Ascending aorta (tissue), 2 donors: ENCODE measurements at regions of chr9 and their contacts with region 1.

Region 1: DNA sequence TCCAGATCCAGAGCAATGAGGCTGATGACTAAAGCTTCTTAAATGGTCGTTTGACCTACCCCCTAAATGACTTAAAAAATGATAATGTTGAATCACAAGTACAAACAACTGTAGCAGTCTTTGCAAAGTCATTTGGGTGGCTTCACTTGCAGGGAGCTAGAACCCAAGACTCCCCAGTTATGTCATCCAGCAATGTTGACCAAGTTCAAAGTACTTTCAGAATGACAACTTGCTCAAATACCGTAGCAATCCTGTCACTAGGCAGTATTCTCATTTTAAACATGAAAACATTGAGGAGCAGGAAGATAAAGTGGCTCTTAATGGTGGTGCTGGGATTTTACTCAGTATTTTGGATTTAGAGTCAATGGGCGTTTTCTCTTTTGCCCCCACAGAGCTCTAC is 1217.0 kb upstream of the DMAC1 start:
- DNase-seq: no peak
- H3K4me3 ChIP-seq: no peak overlapping the region
- H3K27ac ChIP-seq: no peak overlapping the region
- H3K4me1 ChIP-seq: no peaks in the 10 kb centered on the region
- H3K27me3 ChIP-seq: no peaks in the 10 kb centered on the region
- CTCF ChIP-seq: no peak

Region 2: DNA sequence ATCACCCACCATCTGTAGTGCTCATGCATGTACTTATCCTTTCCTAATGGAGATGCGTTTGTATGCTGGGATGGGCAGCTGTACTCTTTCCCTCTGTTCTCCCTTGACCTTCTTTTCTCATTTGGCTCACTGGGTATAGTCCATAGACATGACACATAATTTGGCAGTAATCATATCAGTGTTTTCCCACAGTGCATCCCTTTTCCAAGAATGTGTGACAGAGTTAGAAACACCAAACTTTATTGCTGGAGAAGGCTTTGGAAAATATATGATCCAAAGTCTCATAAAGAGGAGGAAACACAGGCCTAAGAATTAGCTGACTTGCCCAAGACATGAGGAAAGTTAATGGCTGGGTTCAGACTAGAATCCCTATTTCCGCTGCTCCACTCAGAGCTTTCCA is 16.4 kb after region 1 on chr9:
- intact Hi-C with region 1: no loop called
- DNase-seq: no peak
- H3K4me3 ChIP-seq: no peak overlapping the region
- H3K27ac ChIP-seq: no peak overlapping the region
- H3K4me1 ChIP-seq: no peaks in the 10 kb centered on the region
- H3K27me3 ChIP-seq: no peaks in the 10 kb centered on the region
- CTCF ChIP-seq: no peak

Region 3: GRCh38 chr9:9054354-9054992 is 37.9 kb after region 1 on chr9:
- intact Hi-C with region 1: loop called (anchors 5 kb)
- DNase-seq: no peak
- H3K4me3 ChIP-seq: no peak overlapping the region
- H3K27ac ChIP-seq: no peak overlapping the region
- H3K4me1 ChIP-seq: no peaks in the 10 kb centered on the region
- H3K27me3 ChIP-seq: no peaks in the 10 kb centered on the region
- CTCF ChIP-seq: no peak

Region 4: DNA sequence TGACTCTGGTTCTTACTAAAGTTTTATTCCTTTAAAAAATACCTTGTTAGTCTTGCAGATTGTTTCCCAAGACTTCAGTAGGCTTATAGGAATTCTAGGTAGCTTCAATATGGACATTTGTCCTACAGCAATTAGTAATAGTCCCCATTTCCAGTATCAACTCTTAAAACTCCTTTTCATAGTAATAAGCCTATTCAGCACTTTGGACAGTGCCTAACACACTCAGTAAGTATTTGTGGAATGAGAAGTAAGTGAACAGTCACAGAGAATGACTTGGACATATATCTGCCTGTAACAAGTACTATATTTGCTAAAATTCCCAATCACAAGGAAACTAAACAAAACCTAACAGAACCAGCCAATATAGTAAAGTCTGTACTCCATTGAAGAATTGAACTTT is 74.8 kb after region 1 on chr9:
- intact Hi-C with region 1: no loop called
- DNase-seq: no peak
- H3K4me3 ChIP-seq: no peak overlapping the region
- H3K27ac ChIP-seq: no peak overlapping the region
- H3K4me1 ChIP-seq: no peaks in the 10 kb centered on the region
- H3K27me3 ChIP-seq: no peaks in the 10 kb centered on the region
- CTCF ChIP-seq: no peak